ENCODE measurements at regions of chr1 and their contacts with region 1.

Region 1: DNA sequence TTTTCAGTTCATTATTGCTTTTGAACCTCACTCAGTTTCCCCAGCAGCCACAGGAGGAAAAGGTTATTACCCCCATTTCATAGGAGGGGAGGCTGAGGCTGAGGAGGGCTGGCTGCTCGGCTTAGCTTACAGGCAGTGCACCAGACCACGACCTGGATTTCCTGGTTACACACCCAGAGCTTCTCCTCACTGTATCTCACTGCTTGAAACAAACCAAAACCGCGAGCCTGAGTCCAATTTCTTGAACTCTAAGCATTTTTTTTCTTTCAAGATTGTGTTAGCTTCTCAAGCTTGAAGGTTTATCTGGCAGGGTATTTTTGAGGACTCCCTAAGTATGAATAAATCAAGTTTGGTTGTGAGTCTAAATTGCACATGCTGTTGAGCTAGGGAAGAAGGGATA is 188.9 kb upstream of the EDN2 start:
- DNase-seq: no peak
- H3K4me3 ChIP-seq: no peak overlapping the region
- H3K27ac ChIP-seq: peak overlapping the region; percentile 99
- H3K27me3 ChIP-seq: no peaks in the 10 kb centered on the region
- CTCF ChIP-seq: no peak

Region 2: DNA sequence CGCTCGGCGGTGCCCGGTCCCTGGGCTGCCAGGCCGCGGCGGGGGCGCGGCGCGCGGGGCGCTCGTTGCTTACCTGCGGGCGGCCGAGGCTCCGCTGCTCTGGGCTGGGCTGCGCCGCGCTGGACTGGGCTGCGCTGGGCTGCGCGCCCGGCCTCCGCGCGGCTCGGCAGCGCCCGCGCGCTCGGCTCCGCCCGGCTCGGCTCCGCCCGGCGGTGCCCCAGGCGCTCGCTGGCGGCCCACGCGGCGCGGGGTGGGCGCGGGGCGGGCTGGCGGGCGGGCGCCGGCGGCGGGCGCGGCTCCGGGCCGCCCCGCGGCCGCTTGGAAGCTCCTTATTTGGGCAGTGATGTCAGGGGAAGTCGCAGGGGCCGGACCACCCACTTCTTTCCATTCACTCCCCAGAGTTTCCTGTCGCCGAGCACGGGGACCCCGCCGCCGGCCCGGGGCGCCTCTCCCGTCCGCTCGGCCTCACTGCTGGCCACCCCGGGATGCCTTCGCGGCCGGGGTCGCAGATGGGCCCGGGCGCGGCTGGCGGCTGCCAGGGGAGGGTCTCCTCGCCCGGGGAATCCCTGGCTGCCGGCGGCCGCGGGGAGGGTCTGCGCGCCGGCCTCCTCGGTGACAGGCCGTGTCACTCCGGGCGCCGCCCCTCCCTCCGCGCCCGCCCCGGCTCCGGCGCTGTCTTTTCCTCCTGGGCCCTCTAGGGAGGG is 11.2 kb before region 1 on chr1:
- CTCF ChIA-PET with region 1: no interaction called
- POLR2A ChIA-PET with region 1: interaction called, 18 read pairs
- DNase-seq: peak; percentile 51
- H3K4me3 ChIP-seq: peak overlapping the region; percentile 84
- H3K27ac ChIP-seq: peak overlapping the region; percentile 47
- H3K27me3 ChIP-seq: no peaks in the 10 kb centered on the region
- CTCF ChIP-seq: no peak

Measured in AG04450 (cell line).